Activated B cell treated with CpG ODN at 0.5 μM for 24 hours (primary cell): ENCODE measurements at regions of chr6 and their contacts with region 1.

Region 1: GRCh38 chr6:44667668-44668390 is 280.3 kb downstream of the CDC5L start:
- DNase-seq: no peak
- ATAC-seq: no peak
- H3K4me3 Mint-ChIP-seq: no peak overlapping the region
- H3K27ac Mint-ChIP-seq: no peak overlapping the region
- H3K4me1 Mint-ChIP-seq: no peaks in the 10 kb centered on the region
- H3K27me3 Mint-ChIP-seq: peaks cover 17% of the 10 kb centered on the region
- CTCF ChIP-seq: no peak

Region 2: GRCh38 chr6:44563397-44563796 is 104.4 kb before region 1 on chr6:
- CTCF ChIA-PET with region 1: no interaction called
- POLR2A ChIA-PET with region 1: no interaction called
- intact Hi-C with region 1: no loop called
- DNase-seq: no peak
- ATAC-seq: no peak
- H3K4me3 Mint-ChIP-seq: no peak overlapping the region
- H3K27ac Mint-ChIP-seq: no peak overlapping the region
- H3K4me1 Mint-ChIP-seq: peaks cover 5% of the 10 kb centered on the region
- H3K27me3 Mint-ChIP-seq: peaks cover 22% of the 10 kb centered on the region
- CTCF ChIP-seq: no peak

Region 3: DNA sequence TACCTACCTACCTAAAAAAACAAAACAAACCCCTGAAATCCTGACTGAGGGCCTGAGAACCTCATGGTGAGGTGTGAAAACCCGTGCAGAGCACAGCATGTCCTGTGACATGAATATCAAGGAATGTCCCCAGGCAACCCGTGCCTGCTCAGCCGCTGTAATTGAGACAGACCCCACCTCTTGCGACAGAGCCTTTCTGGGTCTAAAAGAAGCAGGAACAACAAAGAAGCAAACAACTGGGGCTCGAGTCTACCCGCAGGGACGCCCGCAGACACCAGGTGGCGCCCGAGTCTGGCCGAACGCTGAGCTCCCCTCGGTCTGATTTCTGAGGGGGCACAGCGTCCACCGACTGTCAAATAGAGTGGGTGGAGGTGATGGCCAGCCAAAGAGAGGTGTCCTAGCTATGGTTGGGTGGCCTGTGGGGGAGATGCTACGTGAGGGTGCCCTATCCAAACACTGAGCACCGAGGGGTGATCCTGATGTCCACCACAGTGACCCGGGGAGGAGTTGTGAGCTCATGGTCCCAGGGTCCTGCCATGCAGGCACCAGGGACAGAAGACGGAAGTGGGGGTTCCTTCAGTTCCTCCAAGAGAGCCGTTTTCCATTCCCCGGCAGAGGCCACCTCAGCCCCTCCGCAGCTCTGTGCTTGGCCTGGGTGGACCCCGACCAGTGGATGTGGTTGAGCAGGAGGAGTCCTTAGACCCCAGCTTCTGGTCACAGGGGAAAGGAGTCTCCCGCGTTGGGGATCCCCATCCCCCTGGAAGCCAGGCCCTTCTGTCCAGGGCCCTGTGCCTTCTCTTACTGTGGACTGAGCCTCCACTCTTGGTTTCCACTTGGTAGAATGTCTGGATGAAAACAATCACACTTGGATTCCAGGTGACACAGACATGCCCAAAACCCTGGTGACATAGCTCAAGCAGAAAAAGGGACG is 12.2 kb before region 1 on chr6:
- CTCF ChIA-PET with region 1: interaction called, 10 read pairs
- POLR2A ChIA-PET with region 1: no interaction called
- intact Hi-C with region 1: no loop called
- DNase-seq: peak; percentile 65
- ATAC-seq: peak; percentile 56
- H3K4me3 Mint-ChIP-seq: no peak overlapping the region
- H3K27ac Mint-ChIP-seq: no peak overlapping the region
- H3K4me1 Mint-ChIP-seq: peaks cover 2% of the 10 kb centered on the region
- H3K27me3 Mint-ChIP-seq: peaks cover 24% of the 10 kb centered on the region
- CTCF ChIP-seq: peak; percentile 71

Region 4: DNA sequence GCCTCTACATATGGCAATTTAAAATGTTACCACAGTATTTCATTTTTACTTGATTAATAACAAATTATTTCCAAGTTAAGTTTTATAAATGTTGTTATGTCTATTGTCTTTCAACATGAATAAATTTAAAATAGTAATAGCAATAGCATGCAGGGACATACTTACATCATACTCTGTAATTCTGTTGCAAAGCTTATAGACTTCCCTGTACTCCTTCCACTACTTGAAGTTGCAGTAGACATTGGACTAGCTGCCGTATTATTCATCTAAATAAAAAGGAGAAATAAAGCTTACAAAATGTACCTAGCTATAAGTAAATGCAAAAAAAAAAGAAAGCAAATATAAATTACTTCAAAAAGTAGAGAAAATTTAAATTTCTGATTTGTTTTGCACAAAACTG is 697.2 kb after region 1 on chr6:
- CTCF ChIA-PET with region 1: no interaction called
- POLR2A ChIA-PET with region 1: no interaction called
- intact Hi-C with region 1: no loop called
- DNase-seq: no peak
- ATAC-seq: no peak
- H3K4me3 Mint-ChIP-seq: no peak overlapping the region
- H3K27ac Mint-ChIP-seq: no peak overlapping the region
- H3K4me1 Mint-ChIP-seq: no peaks in the 10 kb centered on the region
- H3K27me3 Mint-ChIP-seq: peaks cover 1% of the 10 kb centered on the region
- CTCF ChIP-seq: no peak